ENCODE measurements at regions of chr1 and their contacts with region 1.

Region 1: GRCh38 chr1:19596714-19597495 is 47.2 kb upstream of the NBL1 start:
- DNase-seq: peak; percentile 99
- H3K4me3 Mint-ChIP-seq: peak overlapping the region; percentile 94
- H3K27ac Mint-ChIP-seq: peak overlapping the region; percentile 97
- H3K4me1 Mint-ChIP-seq: peaks cover 39% of the 10 kb centered on the region
- H3K27me3 Mint-ChIP-seq: no peaks in the 10 kb centered on the region

Region 2: DNA sequence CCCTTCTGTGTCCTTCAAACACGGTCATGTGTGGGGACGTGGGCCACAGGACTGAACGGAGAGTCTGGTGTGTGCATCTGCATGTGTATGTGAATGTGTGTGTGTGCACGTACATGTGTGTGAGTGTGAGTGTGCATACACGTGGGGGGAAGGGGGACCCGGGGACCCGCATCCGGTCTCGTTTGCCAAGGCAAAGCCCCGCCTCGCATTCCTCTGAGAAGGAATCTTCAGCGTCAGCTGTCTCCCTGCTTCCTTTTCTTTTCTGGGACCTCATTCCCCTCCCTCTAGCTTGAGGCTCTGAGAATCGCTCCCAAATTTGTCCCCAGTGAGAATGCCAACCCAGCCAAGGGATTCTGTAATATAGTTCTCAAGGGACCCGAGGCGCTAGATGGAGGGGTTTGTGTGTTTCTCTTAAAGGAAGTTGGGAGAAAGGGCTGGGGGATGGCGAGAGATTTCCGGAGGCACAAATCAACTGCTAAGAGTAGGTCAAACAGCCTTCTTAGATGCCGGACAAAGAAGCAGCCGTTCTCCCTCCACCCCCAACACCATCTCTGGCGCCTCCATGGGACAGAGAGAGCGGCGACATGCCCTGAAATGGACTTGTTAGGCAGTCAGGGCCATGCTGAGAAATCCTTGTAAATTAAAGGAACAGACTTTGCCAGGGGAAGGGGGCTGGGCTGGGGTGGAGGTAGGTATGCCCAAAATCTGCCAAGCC is 647.1 kb before region 1 on chr1:
- CTCF ChIA-PET with region 1: no interaction called
- intact Hi-C with region 1: loop called (anchors 5 kb)
- DNase-seq: peak; percentile 45
- H3K4me3 Mint-ChIP-seq: peak overlapping the region; percentile 75
- H3K27ac Mint-ChIP-seq: peak overlapping the region; percentile 93
- H3K4me1 Mint-ChIP-seq: peaks cover 95% of the 10 kb centered on the region
- H3K27me3 Mint-ChIP-seq: no peaks in the 10 kb centered on the region

Region 3: GRCh38 chr1:19251305-19252196 is 345.4 kb before region 1 on chr1 and contains the starts of genes EMC1 and MRTO4:
- CTCF ChIA-PET with region 1: no interaction called
- intact Hi-C with region 1: loop called (anchors 5 kb)
- DNase-seq: peak; percentile 90
- H3K4me3 Mint-ChIP-seq: peak within 1 kb of the TSS; percentile 85
- H3K27ac Mint-ChIP-seq: peak within 1 kb of the TSS; percentile 90
- H3K4me1 Mint-ChIP-seq: peaks cover 47% of the 10 kb centered on the region
- H3K27me3 Mint-ChIP-seq: no peaks in the 10 kb centered on the region
- total RNA-seq, gene EMC1: 40.2 to 43.2 TPM
- total RNA-seq, gene MRTO4: 53.2 to 54.3 TPM

Region 4: GRCh38 chr1:19390901-19391595 is 205.9 kb before region 1 on chr1:
- CTCF ChIA-PET with region 1: no interaction called
- intact Hi-C with region 1: loop called (anchors 1 kb)
- DNase-seq: peak; percentile 69
- H3K4me3 Mint-ChIP-seq: peak overlapping the region; percentile 62
- H3K27ac Mint-ChIP-seq: peak overlapping the region; percentile 81
- H3K4me1 Mint-ChIP-seq: peaks cover 68% of the 10 kb centered on the region
- H3K27me3 Mint-ChIP-seq: no peaks in the 10 kb centered on the region

Region 5: DNA sequence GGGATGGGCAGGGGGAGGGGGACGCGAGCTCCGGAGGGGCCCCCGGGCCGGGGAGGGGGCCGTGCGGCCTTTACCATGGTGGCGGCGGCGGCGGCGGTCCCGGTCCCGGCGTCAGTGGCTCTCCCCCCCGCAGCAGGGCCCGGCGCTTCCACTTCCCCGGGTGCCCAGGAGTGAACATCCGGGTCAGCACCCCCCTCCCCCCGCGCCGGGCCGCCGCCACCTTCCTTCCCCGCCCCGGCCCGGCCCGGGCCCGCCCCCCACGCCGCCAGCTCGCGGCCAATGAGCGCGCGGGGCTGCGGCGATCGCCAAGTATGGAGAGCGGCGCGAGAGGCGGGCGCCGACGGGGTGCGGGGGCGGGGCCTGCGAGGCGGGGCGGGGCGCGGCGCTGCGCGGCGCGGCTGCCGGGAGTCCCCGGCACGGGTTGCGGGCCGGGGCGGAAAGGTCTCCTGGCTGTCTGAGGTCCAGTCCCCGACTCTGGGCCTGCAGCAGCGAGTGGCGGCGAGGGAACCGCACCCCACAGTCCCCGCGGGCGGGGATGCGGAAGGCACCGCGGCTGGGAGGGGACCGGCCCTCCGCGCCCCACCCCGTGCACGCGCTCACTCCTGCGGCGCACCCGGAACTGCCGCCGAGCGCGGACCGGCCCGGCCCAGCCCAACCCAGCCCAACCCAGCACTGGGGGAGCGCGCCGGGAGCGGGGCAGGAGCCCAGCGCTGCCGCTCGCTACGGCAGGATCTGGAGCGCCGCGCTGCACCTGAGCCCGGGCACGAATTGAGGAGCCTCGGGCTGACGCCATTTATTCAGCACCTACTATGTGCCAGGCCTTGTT is 111.3 kb before region 1 on chr1 and contains the start of gene CAPZB:
- CTCF ChIA-PET with region 1: no interaction called
- intact Hi-C with region 1: loop called (anchors 1 kb)
- DNase-seq: peak; percentile 95
- H3K4me3 Mint-ChIP-seq: peak within 1 kb of the TSS; percentile 96
- H3K27ac Mint-ChIP-seq: peak within 1 kb of the TSS; percentile 97
- H3K4me1 Mint-ChIP-seq: peaks cover 57% of the 10 kb centered on the region
- H3K27me3 Mint-ChIP-seq: no peaks in the 10 kb centered on the region
- total RNA-seq, gene CAPZB: 362 to 381 TPM

Region 6: GRCh38 chr1:19643602-19644394 is 46.9 kb after region 1 on chr1 and contains the start of gene NBL1:
- CTCF ChIA-PET with region 1: no interaction called
- intact Hi-C with region 1: loop called (anchors 2 kb)
- DNase-seq: peak; percentile 71
- H3K4me3 Mint-ChIP-seq: peak within 1 kb of the TSS; percentile 96
- H3K27ac Mint-ChIP-seq: peak within 1 kb of the TSS; percentile 63
- H3K4me1 Mint-ChIP-seq: peaks cover 29% of the 10 kb centered on the region
- H3K27me3 Mint-ChIP-seq: peaks cover 12% of the 10 kb centered on the region
- total RNA-seq, gene NBL1: 12.2 to 15.2 TPM